ENCODE measurements at regions of chr5 and their contacts with region 1.

Region 1: GRCh38 chr5:140244525-140245025 is 58.3 kb downstream of the PFDN1 start:
- DNase-seq: peak; percentile 85 to 98
- H3K4me3 ChIP-seq: no peak overlapping the region
- CTCF ChIP-seq: peak in 1 of 3 donors; percentile 82
- POLR2A ChIP-seq: no peak

Region 2: DNA sequence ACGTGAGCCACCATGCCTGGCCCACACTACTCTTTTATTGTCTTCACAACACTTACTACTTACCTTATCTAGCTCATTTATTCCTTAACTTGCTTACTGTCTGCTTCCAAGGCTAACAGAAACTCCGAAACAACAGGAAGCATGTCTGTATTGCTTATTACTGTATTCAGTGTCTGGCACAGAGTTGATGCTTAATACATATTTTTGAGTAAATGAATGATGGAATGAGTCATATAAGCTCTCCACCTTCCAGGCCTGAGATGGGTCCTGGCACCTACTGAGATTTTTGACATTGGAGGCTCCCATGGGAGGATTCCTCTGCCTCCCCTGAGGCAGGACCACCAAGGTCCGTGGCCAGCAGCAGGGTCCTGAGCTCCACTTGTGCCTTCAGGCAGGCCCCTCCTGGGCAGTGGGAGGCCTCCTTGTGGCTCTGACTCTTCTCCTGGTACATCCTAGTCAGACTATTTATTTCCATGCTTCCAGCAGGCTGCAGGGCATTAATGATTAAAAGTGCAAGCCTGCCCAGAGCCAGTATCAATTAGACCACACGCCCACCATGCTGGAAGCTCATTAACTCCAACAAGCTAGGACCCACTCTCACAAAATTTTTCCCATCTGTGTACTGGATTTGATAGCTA is 1567.9 kb before region 1 on chr5:
- intact Hi-C with region 1: no loop called
- DNase-seq: peak in 1 of 2 donors; percentile 46
- H3K4me3 ChIP-seq: no peak overlapping the region
- CTCF ChIP-seq: no peak
- POLR2A ChIP-seq: no peak

Region 3: DNA sequence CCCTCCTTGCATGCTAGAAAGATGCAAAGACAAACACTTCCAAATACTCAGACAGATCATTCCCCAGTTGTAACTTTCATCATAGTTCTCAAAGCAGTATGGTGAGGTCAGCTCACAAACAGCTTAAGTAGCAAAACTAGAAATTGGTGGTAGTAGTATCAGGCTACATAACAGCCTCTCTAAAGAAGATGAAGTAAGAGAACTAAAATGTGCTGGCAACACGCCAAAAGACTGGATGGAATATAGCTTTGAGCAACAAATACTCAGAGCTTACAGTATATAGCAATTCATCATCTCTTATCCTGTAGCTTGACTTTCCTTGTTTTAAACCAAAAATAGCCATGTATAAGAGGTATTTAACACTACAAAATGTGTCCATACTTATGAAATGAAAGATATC is 50.8 kb after region 1 on chr5:
- intact Hi-C with region 1: no loop called
- DNase-seq: peak in 1 of 2 donors; percentile 54
- H3K4me3 ChIP-seq: no peak overlapping the region
- CTCF ChIP-seq: no peak
- POLR2A ChIP-seq: no peak

Region 4: GRCh38 chr5:140351609-140352334 is 107.2 kb after region 1 on chr5:
- intact Hi-C with region 1: loop called (anchors 5 kb)
- DNase-seq: peak in 1 of 2 donors; percentile 67
- H3K4me3 ChIP-seq: no peak overlapping the region
- CTCF ChIP-seq: peak in 1 of 3 donors; percentile 69
- POLR2A ChIP-seq: no peak